Naive thymus-derived CD4-positive, alpha-beta T cell (primary cell): ENCODE measurements at regions of chr19 and their contacts with region 1.

Region 1: DNA sequence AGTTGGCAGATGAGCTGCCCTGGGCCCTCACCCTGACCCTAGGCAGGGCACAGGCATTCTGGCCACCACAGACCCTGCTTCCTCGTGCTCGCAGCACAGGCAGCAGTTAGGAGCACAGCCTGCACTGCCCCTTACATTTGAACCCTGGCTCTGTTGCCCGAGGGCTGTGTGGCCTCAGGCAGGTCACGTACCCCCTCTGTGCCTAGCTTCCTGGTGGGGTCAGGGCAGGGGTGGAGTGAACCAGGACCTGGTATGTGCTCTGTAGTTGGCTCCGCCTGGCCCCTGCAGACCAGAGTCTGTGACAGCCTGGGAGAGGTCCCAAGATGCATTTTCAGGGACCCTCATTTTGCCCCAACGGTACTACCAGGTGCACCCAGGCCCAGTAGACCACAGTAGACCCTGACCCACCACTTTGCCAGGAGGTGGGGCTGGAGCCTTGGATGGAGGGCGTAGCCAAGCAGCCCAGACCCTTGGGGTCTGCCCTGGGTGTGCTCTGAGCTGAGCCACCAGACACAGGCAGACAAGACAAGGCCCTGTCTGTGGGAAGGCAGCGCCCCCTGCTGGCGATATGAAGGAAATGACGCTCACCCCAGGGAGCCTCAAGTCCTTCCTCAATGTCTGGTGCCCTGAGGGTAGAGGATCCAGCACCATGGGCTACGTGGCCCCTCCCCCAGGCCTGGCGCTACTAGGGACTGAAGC is 9.1 kb downstream of the LYL1 start:
- DNase-seq: peak; percentile 71 to 83 (median 78)
- ATAC-seq: peak; percentile 85
- H3K4me3 ChIP-seq: no peak overlapping the region
- H3K4me3 Mint-ChIP-seq: peak overlapping the region in 1 of 10 donors; percentile 25
- H3K27ac ChIP-seq: no peak overlapping the region
- H3K27ac Mint-ChIP-seq: no peak overlapping the region
- H3K4me1 ChIP-seq: peaks cover 18% of the 10 kb centered on the region in 2 donors
- H3K4me1 Mint-ChIP-seq: peaks cover 13 to 30% (median 23%) of the 10 kb centered on the region in 7 donors
- H3K27me3 ChIP-seq: peaks cover 0 to 6% of the 10 kb centered on the region in 2 donors
- H3K27me3 Mint-ChIP-seq: peaks cover 6 to 37% (median 16%) of the 10 kb centered on the region in 5 donors

Region 2: DNA sequence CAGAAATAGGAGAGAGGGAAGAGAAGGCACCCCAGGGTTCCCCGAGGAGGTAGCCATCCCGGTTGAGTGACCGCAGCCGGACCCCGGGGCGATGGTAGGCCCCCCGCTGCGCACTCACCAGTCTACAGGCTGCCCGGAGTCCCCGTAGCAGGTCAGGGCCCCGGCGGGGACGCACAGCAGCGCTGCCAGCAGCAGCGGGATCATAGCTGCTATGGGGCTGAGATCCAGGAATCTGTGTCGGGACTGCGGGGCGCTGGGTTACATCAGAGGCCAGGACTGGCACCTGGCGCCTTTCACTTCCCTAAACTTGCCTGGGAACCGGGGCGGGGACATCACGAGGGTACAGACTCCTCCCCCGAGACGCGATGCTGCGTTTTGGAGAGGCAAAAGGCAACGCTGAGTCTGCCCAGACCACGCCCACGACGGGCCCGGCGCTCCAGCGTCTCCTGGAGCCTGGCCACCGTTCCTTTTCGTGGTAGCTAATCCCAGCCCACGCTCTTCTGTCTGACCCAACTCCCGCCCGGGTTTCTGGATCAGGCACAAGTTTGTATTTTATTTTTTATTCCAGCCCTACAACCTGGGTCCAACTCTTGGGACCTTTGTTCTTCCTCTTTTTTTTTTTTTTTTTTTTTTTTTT is 212.3 kb before region 1 on chr19 and contains the start of gene DNASE2:
- CTCF ChIA-PET with region 1: no interaction called
- POLR2A ChIA-PET with region 1: no interaction called
- intact Hi-C with region 1: loop called in 1 of 2 experiments (anchors 10 kb)
- DNase-seq: peak; percentile 69 to 89 (median 81)
- ATAC-seq: peak; percentile 81
- H3K4me3 ChIP-seq: peak within 1 kb of the TSS; percentile 72
- H3K4me3 Mint-ChIP-seq: peak within 1 kb of the TSS; percentile 87 to 94 (median 88)
- H3K27ac ChIP-seq: peak within 1 kb of the TSS; percentile 77
- H3K27ac Mint-ChIP-seq: peak within 1 kb of the TSS; percentile 76 to 94 (median 89)
- H3K4me1 ChIP-seq: peaks cover 10 to 11% of the 10 kb centered on the region in 2 donors
- H3K4me1 Mint-ChIP-seq: peaks cover 20 to 39% (median 30%) of the 10 kb centered on the region in 7 donors
- H3K27me3 ChIP-seq: no peaks in the 10 kb centered on the region
- H3K27me3 Mint-ChIP-seq: peaks cover 0 to 1% (median 0%) of the 10 kb centered on the region in 5 donors
- total RNA-seq, gene DNASE2: 14.2 to 29.9 (median 28.1) TPM

Region 3: DNA sequence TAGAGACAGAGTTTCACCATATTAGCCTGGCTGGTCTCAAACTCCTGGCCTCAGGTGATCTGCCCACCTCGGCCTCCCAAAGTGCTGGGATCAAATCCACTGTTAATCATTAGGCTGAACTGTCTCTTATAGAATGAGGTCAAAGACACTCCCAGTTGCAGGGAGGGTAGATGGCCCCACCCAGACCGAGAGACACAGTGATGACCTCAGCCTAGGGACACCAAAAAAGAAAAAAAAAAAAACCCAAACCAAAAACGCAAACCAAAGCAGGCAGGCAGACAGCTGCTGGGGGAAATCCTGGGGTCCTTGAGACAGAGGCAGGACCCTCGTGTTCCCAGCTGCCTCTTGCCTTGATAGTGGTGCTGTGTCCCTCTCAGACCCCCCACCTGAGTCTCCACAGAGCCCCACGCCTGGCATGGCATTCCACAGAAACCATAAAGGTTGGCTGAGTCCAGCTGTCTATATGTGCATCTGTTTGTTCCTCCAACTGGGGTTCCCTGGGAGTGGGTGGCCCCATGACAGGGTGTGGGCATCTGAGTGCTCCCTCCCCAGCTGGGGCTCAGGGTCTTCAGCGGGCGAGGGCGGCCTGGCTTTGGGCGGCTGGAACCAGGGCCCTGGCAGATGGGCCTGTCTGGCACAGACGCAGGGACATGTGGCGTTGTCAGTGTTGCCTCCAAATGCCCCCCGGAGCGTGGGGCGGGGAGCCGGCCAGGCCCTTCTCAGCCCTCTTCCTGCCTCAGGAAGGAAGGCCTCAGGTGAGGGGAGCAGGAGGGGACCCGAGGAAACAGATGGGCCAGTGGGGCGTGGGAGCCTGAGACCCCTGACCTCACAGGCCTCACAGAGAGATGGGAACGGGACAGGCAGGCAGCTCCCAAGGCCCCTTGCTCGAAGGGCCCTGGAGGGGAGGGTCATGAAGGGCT is 119.0 kb before region 1 on chr19:
- CTCF ChIA-PET with region 1: interaction called, 75 read pairs
- POLR2A ChIA-PET with region 1: interaction called, 3 read pairs
- intact Hi-C with region 1: loop called (anchors 1 kb)
- DNase-seq: no peak
- ATAC-seq: no peak
- H3K4me3 ChIP-seq: no peak overlapping the region
- H3K4me3 Mint-ChIP-seq: no peak overlapping the region
- H3K27ac ChIP-seq: no peak overlapping the region
- H3K27ac Mint-ChIP-seq: no peak overlapping the region
- H3K4me1 ChIP-seq: peaks cover 0 to 3% of the 10 kb centered on the region in 2 donors
- H3K4me1 Mint-ChIP-seq: peaks cover 2 to 7% (median 5%) of the 10 kb centered on the region in 7 donors
- H3K27me3 ChIP-seq: no peaks in the 10 kb centered on the region
- H3K27me3 Mint-ChIP-seq: peaks cover 7 to 17% (median 16%) of the 10 kb centered on the region in 5 donors

Region 4: DNA sequence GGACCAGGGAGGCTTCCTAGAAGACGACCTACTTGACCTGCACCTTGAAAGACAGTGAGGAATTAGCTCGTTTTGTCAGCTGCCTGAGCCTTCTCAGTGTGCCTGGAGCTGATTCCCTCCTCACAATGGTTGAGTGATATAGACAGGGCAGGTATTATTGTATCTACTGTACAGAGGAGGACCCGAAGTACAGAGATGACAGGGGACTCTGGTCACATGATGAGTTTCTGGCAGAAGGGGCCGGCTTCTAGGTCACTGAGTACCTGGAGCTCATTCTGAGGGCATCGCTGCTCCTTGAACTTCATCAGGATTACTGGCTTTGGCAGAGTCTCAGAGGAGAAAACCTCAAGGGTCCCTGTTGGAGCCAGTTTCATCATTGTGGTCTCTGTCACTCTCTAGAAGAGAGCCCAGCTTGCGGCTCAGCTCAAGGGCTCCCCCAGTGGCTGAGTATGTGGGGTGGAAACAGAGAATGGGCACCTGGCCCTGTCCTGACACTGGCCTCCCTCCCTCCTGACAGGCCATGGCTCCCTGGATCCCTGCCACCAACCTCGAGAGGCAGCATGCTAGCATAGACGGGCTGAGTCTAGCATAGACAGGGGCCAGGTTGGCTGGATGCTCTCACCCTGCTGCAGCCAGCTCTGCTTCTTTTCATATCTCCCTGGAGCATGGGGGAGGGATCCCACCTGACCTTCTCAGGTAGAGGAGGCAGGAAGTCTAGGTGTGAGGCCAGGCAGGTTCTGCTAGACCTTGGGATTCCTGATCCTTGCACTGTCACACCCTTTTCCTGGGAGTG is 59.5 kb before region 1 on chr19:
- CTCF ChIA-PET with region 1: interaction called, 4 read pairs
- POLR2A ChIA-PET with region 1: no interaction called
- intact Hi-C with region 1: loop called in 1 of 2 experiments (anchors 2 kb)
- DNase-seq: peak in 3 of 9 donors; percentile 13 to 40 (median 31)
- ATAC-seq: peak; percentile 81
- H3K4me3 ChIP-seq: no peak overlapping the region
- H3K4me3 Mint-ChIP-seq: no peak overlapping the region
- H3K27ac ChIP-seq: no peak overlapping the region
- H3K27ac Mint-ChIP-seq: no peak overlapping the region
- H3K4me1 ChIP-seq: no peaks in the 10 kb centered on the region
- H3K4me1 Mint-ChIP-seq: peaks cover 0 to 7% (median 0%) of the 10 kb centered on the region in 7 donors
- H3K27me3 ChIP-seq: no peaks in the 10 kb centered on the region
- H3K27me3 Mint-ChIP-seq: no peaks in the 10 kb centered on the region

Region 5: GRCh38 chr19:13104360-13104847 is 10.8 kb after region 1 on chr19:
- CTCF ChIA-PET with region 1: interaction called, 19 read pairs
- POLR2A ChIA-PET with region 1: interaction called, 8 read pairs
- intact Hi-C with region 1: loop called in 1 of 2 experiments (anchors 1 kb)
- DNase-seq: peak; percentile 48 to 78 (median 62)
- ATAC-seq: peak; percentile 67
- H3K4me3 ChIP-seq: peak overlapping the region; percentile 82
- H3K4me3 Mint-ChIP-seq: peak overlapping the region; percentile 80 to 97 (median 93)
- H3K27ac ChIP-seq: peak overlapping the region; percentile 74
- H3K27ac Mint-ChIP-seq: peak overlapping the region; percentile 71 to 94 (median 87)
- H3K4me1 ChIP-seq: peaks cover 46 to 48% of the 10 kb centered on the region in 2 donors
- H3K4me1 Mint-ChIP-seq: peaks cover 0 to 36% (median 30%) of the 10 kb centered on the region in 7 donors
- H3K27me3 ChIP-seq: no peaks in the 10 kb centered on the region
- H3K27me3 Mint-ChIP-seq: peaks cover 0 to 3% (median 0%) of the 10 kb centered on the region in 5 donors